Naive thymus-derived CD4-positive, alpha-beta T cell (primary cell): ENCODE measurements at regions of chr7 and their contacts with region 1.

Region 1: GRCh38 chr7:332646-333392 is 42.8 kb downstream of the FOXL3 start:
- DNase-seq: peak; percentile 79 to 96 (median 89)
- ATAC-seq: peak; percentile 96
- H3K4me3 ChIP-seq: peak overlapping the region; percentile 55
- H3K4me3 Mint-ChIP-seq: peak overlapping the region in 4 of 10 donors; percentile 35 to 64 (median 46)
- H3K27ac ChIP-seq: peak overlapping the region; percentile 12
- H3K27ac Mint-ChIP-seq: no peak overlapping the region
- H3K4me1 ChIP-seq: no peaks in the 10 kb centered on the region
- H3K4me1 Mint-ChIP-seq: peaks cover 3 to 23% (median 17%) of the 10 kb centered on the region in 7 donors
- H3K27me3 ChIP-seq: no peaks in the 10 kb centered on the region
- H3K27me3 Mint-ChIP-seq: peaks cover 0 to 7% (median 0%) of the 10 kb centered on the region in 5 donors

Region 2: DNA sequence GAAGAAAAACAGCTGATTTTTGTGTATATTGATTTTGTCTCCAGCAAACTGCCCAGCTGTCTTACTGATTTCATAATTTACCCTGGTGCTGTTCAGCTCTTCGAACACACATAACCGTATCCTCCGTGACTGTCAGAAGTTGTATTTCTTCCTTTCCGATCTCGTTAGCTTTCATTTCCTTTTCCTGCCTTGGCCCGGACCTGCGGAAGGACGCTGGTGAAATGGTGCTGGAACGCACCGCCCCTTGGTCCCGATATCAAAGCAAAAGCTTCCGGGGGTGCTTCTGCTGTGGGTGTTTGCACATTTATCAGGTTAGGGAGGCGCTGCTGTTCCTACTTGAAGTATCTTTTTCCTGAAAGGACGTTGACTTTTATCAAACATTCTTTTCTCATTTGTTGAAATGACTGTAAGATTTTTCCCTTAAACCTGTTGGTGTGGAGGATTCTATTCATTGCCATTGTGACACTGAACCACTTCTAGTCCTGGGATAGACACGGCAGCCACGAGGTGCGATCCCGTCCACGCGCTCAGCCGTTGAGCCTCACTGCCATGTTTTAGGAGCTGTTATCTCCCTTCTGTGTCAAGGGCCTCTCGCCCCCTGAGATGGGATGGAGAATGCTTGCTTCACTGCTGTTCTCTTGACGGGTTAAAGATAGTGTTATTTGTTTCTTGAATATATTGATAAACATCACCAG is 29.7 kb after region 1 on chr7:
- CTCF ChIA-PET with region 1: no interaction called
- POLR2A ChIA-PET with region 1: interaction called, 5 read pairs
- intact Hi-C with region 1: loop called in 1 of 2 experiments (anchors 2 kb)
- DNase-seq: peak in 7 of 9 donors; percentile 57 to 70 (median 61)
- ATAC-seq: peak; percentile 68
- H3K4me3 ChIP-seq: peak overlapping the region; percentile 38
- H3K4me3 Mint-ChIP-seq: peak overlapping the region; percentile 71 to 85 (median 76)
- H3K27ac ChIP-seq: peak overlapping the region; percentile 68
- H3K27ac Mint-ChIP-seq: peak overlapping the region; percentile 86 to 98 (median 94)
- H3K4me1 ChIP-seq: peaks cover 29 to 72% of the 10 kb centered on the region in 2 donors
- H3K4me1 Mint-ChIP-seq: peaks cover 52 to 89% (median 73%) of the 10 kb centered on the region in 7 donors
- H3K27me3 ChIP-seq: no peaks in the 10 kb centered on the region
- H3K27me3 Mint-ChIP-seq: peaks cover 0 to 5% (median 0%) of the 10 kb centered on the region in 5 donors

Region 3: GRCh38 chr7:452226-452751 is 119.5 kb after region 1 on chr7:
- CTCF ChIA-PET with region 1: no interaction called
- POLR2A ChIA-PET with region 1: no interaction called
- intact Hi-C with region 1: loop called in 1 of 2 experiments (anchors 5 kb)
- DNase-seq: no peak
- ATAC-seq: no peak
- H3K4me3 ChIP-seq: no peak overlapping the region
- H3K4me3 Mint-ChIP-seq: peak overlapping the region in 2 of 10 donors; percentile 40 to 65
- H3K27ac ChIP-seq: no peak overlapping the region
- H3K27ac Mint-ChIP-seq: peak overlapping the region in 1 of 9 donors; percentile 8
- H3K4me1 ChIP-seq: peaks cover 0 to 18% of the 10 kb centered on the region in 2 donors
- H3K4me1 Mint-ChIP-seq: peaks cover 7 to 21% (median 10%) of the 10 kb centered on the region in 7 donors
- H3K27me3 ChIP-seq: no peaks in the 10 kb centered on the region
- H3K27me3 Mint-ChIP-seq: peaks cover 6 to 14% (median 9%) of the 10 kb centered on the region in 5 donors

Region 4: DNA sequence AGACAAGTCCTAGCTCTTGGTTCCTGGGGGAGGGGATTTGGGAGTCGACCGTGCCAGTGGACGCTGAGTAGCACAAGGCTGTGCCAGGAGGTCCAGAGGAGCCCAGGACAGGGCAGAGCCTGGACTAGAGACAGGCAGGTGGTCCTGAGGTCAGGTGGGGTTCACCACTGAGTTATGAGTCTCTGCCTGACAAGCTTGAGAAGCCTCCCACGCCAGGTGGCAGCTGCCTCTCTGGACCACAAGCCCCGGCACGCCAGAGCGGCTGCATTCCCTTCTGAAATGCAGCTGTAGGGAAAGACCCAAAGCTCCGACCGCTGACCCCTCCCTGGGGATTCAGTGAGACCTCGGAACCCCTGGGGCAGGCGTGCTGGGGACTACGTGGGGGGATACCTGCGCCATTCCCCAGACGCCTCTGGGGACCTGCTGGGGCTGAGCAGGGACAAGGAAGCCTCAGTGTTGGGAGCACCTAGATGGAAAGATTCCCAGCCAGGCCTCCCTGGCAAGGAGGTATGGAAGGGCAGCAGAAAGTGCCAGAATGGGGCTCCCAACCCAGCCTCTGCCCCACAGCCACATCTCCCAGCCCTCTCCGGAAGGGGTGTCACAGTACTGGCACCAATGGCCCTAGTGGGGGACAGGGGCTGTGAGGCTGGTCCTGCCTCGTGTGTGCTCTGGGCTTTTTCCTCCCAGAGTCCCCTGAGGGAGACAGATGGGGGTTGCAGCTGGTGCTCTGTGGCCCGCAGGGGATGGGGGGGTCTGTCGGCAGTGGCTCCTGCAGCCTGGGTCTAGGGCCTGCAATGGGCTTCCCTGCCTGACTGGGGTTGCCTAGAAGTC is 157.9 kb after region 1 on chr7:
- CTCF ChIA-PET with region 1: no interaction called
- POLR2A ChIA-PET with region 1: no interaction called
- intact Hi-C with region 1: no loop called
- DNase-seq: no peak
- ATAC-seq: no peak
- H3K4me3 ChIP-seq: no peak overlapping the region
- H3K4me3 Mint-ChIP-seq: no peak overlapping the region
- H3K27ac ChIP-seq: no peak overlapping the region
- H3K27ac Mint-ChIP-seq: no peak overlapping the region
- H3K4me1 ChIP-seq: no peaks in the 10 kb centered on the region
- H3K4me1 Mint-ChIP-seq: no peaks in the 10 kb centered on the region
- H3K27me3 ChIP-seq: peaks cover 0 to 3% of the 10 kb centered on the region in 2 donors
- H3K27me3 Mint-ChIP-seq: peaks cover 0 to 19% (median 0%) of the 10 kb centered on the region in 5 donors

Region 5: GRCh38 chr7:668139-668931 is 335.5 kb after region 1 on chr7:
- CTCF ChIA-PET with region 1: no interaction called
- POLR2A ChIA-PET with region 1: no interaction called
- intact Hi-C with region 1: loop called in 1 of 2 experiments (anchors 1 kb)
- DNase-seq: peak in 6 of 9 donors; percentile 13 to 38 (median 32)
- ATAC-seq: no peak
- H3K4me3 ChIP-seq: peak overlapping the region; percentile 28
- H3K4me3 Mint-ChIP-seq: peak overlapping the region in 1 of 10 donors; percentile 6
- H3K27ac ChIP-seq: peak overlapping the region; percentile 61
- H3K27ac Mint-ChIP-seq: no peak overlapping the region
- H3K4me1 ChIP-seq: peaks cover 0 to 9% of the 10 kb centered on the region in 2 donors
- H3K4me1 Mint-ChIP-seq: peaks cover 0 to 6% (median 0%) of the 10 kb centered on the region in 7 donors
- H3K27me3 ChIP-seq: no peaks in the 10 kb centered on the region
- H3K27me3 Mint-ChIP-seq: no peaks in the 10 kb centered on the region

Region 6: DNA sequence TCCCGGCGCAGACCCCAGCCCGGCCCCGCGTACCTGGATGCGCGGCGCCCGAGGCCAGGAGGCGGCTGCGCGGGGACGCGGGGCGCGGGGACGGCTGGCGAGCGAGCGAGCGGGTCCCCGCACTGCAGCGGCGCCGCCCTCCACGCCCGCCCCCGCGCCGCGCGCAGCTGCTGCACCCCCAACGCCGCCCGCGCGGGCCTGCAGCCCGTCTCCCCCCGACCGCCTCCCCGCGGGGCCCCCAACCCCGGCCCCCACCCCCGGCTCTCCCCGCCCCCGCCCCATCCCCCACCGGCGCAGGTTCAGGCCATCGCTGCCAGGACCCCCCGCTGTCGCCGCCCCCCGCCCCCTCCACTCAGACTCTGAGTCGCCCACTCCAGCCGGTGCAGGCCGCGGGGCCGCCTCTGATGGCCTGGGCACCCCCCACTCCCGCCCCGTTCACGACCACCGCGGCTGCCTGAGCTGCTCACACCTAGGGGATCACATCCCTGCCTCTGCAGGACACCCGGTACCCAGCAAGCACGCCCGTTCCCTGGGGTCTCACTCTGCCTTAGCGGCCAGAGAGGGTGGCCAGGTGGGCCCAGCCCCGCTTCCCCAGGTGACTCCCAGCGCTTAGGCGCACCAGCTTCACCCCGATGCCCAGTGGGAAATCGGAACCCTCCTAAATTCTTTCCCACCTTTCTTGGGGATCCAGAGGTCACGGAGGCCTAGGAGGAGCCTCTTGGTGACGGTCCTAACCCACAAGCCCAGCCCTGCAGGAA is 379.7 kb after region 1 on chr7:
- CTCF ChIA-PET with region 1: no interaction called
- POLR2A ChIA-PET with region 1: no interaction called
- intact Hi-C with region 1: no loop called
- DNase-seq: peak in 4 of 9 donors; percentile 28 to 43 (median 42)
- ATAC-seq: peak; percentile 75
- H3K4me3 ChIP-seq: peak overlapping the region; percentile 24
- H3K4me3 Mint-ChIP-seq: peak overlapping the region in 9 of 10 donors; percentile 9 to 86 (median 68)
- H3K27ac ChIP-seq: peak overlapping the region; percentile 62
- H3K27ac Mint-ChIP-seq: peak overlapping the region in 6 of 9 donors; percentile 53 to 87 (median 82)
- H3K4me1 ChIP-seq: peaks cover 0 to 5% of the 10 kb centered on the region in 2 donors
- H3K4me1 Mint-ChIP-seq: peaks cover 5 to 34% (median 15%) of the 10 kb centered on the region in 7 donors
- H3K27me3 ChIP-seq: no peaks in the 10 kb centered on the region
- H3K27me3 Mint-ChIP-seq: peaks cover 0 to 5% (median 0%) of the 10 kb centered on the region in 5 donors

Region 7: DNA sequence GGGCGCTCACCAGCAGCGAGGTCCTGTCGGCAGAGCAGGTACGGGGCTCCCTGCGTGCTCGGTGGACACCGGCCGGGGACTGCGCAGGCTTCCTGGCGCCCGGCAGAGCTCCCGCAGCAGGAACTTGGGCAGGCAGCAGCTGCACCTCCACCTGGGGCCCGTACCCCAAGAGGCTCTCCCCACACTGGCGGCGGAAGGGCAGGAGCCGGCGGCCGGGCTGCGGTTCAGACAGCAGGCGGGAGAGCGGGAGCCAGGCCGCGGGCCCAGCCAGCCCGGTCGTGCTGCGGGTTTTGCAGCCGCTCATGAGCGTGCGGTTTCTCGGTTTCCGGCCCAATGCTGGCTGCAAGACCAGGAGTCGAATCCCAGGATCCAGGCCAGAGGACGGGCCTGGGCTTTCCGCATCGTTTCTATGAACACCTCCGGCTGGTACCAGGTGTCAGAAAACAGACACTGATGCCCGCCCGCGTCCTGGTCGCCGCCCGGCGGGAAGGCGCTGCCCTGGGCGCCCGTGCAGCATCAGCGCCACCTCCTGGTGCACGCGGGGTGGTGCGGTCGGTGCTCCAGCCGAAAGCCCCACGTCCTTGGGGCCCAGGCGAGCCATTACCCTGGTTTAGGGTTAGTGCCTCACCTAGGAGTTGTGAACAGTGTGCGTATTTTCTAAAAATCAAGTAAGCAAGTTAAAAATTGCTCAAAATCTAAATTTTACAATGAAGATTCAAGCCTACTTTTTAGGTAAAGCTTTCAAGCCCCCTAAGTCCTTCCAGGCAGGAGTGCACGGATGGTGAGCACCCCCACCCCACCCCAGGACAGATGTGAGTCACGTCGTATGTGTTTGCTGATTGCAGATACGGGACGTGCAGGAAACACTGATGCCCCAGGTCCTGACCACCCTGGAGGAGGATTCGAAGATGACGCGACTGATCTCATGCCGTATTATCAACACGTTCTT is 441.6 kb after region 1 on chr7:
- CTCF ChIA-PET with region 1: interaction called, 8 read pairs
- POLR2A ChIA-PET with region 1: no interaction called
- intact Hi-C with region 1: loop called (anchors 1 kb)
- DNase-seq: peak; percentile 38 to 79 (median 62)
- ATAC-seq: peak; percentile 84
- H3K4me3 ChIP-seq: no peak overlapping the region
- H3K4me3 Mint-ChIP-seq: no peak overlapping the region
- H3K27ac ChIP-seq: no peak overlapping the region
- H3K27ac Mint-ChIP-seq: no peak overlapping the region
- H3K4me1 ChIP-seq: no peaks in the 10 kb centered on the region
- H3K4me1 Mint-ChIP-seq: no peaks in the 10 kb centered on the region
- H3K27me3 ChIP-seq: no peaks in the 10 kb centered on the region
- H3K27me3 Mint-ChIP-seq: no peaks in the 10 kb centered on the region

Region 8: DNA sequence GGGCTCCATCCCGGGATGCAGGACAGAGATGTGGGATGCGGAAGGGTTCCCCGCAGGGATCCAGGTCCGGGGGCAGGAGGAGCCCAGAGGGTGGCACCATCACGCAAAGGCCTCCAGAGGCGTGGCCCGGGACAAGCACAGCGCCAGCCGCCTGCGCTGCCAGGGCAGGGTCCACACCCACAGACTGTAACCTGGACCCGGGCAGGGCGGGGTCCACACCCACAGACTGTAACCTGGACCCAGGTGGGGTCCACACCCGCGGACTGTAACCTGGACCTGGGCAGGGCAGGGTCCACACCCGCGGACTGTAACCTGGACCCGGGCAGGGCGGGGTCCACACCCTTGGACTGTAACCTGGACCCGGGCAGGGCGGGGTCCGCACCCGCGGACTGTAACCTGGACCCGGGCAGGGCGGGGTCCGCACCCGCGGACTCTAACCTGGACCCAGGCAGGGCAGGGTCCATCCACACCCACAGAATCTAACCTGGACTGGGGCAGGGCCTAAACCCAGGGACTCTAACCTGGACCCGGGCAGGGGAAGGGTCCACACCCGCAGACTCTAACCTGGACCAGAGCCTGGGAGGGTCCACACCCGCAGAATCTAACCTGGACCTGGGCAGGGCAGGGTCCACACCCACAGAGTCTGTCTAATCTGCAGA is 462.0 kb after region 1 on chr7:
- CTCF ChIA-PET with region 1: no interaction called
- POLR2A ChIA-PET with region 1: no interaction called
- intact Hi-C with region 1: no loop called
- DNase-seq: no peak
- ATAC-seq: no peak
- H3K4me3 ChIP-seq: no peak overlapping the region
- H3K4me3 Mint-ChIP-seq: no peak overlapping the region
- H3K27ac ChIP-seq: no peak overlapping the region
- H3K27ac Mint-ChIP-seq: no peak overlapping the region
- H3K4me1 ChIP-seq: no peaks in the 10 kb centered on the region
- H3K4me1 Mint-ChIP-seq: no peaks in the 10 kb centered on the region
- H3K27me3 ChIP-seq: no peaks in the 10 kb centered on the region
- H3K27me3 Mint-ChIP-seq: no peaks in the 10 kb centered on the region